Posterior vena cava (tissue), 2 donors: ENCODE measurements at regions of chrX and their contacts with region 1.

Region 1: GRCh38 chrX:146615628-146616348 is 193.8 kb upstream of the CXorf51B start:
- DNase-seq: no peak

Region 2: DNA sequence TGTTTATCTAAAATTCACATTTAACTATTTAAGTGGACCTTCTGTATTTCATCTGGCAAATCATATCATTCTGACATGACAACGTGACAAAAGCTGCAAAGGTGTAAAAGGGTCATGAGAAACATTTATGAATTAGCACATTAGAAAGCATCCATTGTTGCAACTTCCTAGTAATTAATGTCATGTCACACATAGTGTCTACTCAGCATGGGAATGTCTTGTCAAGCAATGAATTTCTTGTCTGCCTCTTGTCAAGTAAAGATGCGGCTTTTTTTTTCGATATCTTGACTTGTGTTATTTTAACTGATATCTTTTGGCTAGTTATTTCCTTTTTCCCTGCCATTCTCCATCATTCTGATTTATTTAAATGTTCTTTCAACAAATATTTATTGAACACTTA is 269.7 kb before region 1 on chrX:
- intact Hi-C with region 1: no loop called
- DNase-seq: no peak

Region 3: GRCh38 chrX:146581981-146582712 is 33.6 kb before region 1 on chrX:
- intact Hi-C with region 1: loop called in 1 of 2 experiments (anchors 2 kb)
- DNase-seq: no peak

Region 4: GRCh38 chrX:147342197-147342596 is 726.4 kb after region 1 on chrX:
- intact Hi-C with region 1: no loop called
- DNase-seq: no peak